ENCODE measurements at regions of chrX and their contacts with region 1.

Region 1: DNA sequence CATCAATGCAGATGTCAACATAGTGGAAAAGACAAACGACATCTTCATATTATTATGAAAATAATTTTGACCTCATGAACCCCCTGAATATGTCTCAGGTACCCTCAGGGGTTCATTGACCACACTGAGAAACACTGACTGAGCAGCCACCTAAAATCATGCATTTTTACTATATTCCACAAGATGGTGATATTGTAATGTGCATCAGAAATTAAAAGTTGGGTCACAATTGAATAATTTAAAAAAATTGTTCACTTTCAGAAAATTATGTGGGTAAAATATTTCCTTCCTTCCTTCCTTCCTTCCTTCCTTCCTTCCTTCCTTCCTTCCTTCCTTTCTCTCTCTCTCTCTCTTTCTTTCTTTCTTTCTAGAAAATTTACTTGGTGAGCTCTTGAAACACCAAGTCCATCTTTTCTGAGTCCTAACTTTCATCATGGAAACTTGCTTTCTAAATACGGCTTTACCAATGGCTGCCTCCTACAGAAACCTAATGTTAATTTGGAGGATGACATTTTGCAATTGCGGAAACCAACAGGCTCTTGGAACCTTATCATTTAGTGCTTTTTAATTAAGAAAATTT is 103.6 kb downstream of the RTL3 start:
- DNase-seq: no peak
- H3K4me3 ChIP-seq: no peak overlapping the region
- H3K27ac ChIP-seq: no peak overlapping the region
- H3K4me1 ChIP-seq: no peaks in the 10 kb centered on the region
- H3K27me3 ChIP-seq: no peaks in the 10 kb centered on the region
- CTCF ChIP-seq: peak; percentile 52

Region 2: GRCh38 chrX:78708262-78708661 is 152.8 kb after region 1 on chrX:
- CTCF ChIA-PET with region 1: no interaction called
- POLR2A ChIA-PET with region 1: no interaction called
- intact Hi-C with region 1: loop called (anchors 5 kb)
- DNase-seq: no peak
- H3K4me3 ChIP-seq: no peak overlapping the region
- H3K27ac ChIP-seq: no peak overlapping the region
- H3K4me1 ChIP-seq: no peaks in the 10 kb centered on the region
- H3K27me3 ChIP-seq: no peaks in the 10 kb centered on the region
- CTCF ChIP-seq: no peak; the same call in 1 of the 2 replicates

Region 3: DNA sequence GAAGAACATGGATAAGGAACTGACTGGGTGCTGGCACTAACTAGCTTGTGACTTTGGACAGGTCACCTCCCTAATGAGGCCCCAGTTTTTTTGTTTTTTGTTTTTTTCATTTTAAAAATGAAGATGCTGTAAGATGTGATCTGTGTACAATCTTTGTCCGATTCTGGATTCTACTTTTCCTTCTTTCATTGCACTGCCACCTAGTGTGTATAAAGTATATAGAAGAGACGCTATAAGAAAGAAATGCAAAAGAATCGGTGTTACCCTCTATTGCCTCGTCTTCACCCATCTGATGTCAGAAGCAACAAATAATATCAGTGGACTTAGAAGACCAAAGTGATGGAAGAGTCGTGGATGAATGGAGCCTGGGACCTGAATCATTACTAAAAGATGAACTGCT is 331.1 kb after region 1 on chrX:
- CTCF ChIA-PET with region 1: no interaction called
- POLR2A ChIA-PET with region 1: no interaction called
- intact Hi-C with region 1: loop called (anchors 10 kb)
- DNase-seq: no peak
- H3K4me3 ChIP-seq: no peak overlapping the region
- H3K27ac ChIP-seq: no peak overlapping the region
- H3K4me1 ChIP-seq: no peaks in the 10 kb centered on the region
- H3K27me3 ChIP-seq: no peaks in the 10 kb centered on the region
- CTCF ChIP-seq: peak; percentile 36

Region 4: DNA sequence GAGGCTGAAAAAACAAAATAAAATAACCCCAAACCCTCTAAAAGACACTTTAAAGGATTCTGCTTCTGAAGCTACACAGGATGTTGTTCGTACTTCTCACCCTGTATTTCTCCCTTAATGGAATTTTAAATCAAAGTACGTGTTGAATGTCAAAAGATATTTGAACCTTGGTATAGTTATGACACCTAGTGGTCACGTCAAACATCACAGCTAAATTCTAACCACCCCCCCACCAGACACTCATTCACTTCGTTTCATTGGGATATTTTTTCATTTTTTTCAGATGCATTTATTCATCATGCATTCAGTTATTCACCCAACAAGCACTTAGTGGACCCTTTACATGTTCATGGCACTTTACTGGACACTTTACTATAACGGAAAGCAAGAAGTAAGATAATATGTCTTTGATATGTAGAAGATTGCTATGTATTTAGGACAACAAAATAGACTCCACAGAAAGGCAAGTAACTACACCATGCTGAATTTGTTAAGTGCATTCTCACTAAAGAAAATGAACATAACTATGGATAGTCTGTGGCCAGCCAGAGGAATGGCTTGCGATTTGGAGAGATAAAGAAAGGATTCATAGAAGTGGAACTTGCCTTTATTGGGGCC is 526.5 kb after region 1 on chrX:
- CTCF ChIA-PET with region 1: no interaction called
- POLR2A ChIA-PET with region 1: no interaction called
- intact Hi-C with region 1: loop called (anchors 2 kb)
- DNase-seq: no peak
- H3K4me3 ChIP-seq: no peak overlapping the region
- H3K27ac ChIP-seq: no peak overlapping the region
- H3K4me1 ChIP-seq: no peaks in the 10 kb centered on the region
- H3K27me3 ChIP-seq: no peaks in the 10 kb centered on the region
- CTCF ChIP-seq: peak; percentile 71

Measured in PC-9 (cell line).